AG04450 (cell line): ENCODE measurements at regions of chr19 and their contacts with region 1.

Region 1: DNA sequence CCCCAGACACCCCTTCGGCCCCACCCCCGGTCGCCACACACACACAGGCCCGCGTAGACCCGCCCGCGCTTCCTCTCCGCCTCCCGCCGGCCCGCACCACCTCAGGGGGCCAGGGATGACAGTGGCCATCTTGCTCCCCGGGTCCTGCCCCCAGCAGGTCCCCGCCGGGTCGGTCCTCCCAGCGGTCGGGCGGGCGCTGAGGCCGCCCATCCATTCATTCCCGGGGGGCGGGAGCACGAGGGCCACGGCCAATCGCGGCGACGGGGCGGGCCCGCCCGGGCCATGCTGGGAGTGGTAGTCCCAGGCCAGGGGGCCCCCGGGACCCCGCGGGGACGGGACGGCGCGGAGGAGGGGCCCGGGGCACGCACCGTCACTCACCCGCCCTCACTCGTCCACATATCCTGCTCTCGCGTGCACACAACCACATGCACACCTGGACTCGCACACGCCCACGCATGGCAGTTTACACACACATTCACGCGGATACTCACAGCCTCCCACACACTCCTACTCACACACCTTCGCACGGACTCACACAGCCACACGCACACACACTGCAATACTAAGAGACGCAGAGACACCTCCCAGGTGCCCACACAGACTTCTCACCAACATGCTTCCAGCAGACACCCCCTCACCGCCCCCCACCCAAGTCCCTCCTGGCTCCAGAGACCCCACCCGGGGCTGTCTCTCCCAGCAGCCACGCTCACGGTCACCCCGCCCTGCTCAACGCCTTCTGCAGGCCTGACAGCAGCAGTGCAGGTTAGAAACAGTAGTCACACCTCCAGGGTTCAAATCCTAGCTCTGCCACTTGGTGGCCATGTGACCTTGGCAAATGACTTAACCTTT is at the start of gene DPF1:
- DNase-seq: no peak
- H3K4me3 ChIP-seq: peak within 1 kb of the TSS; percentile 67
- H3K27ac ChIP-seq: no peak within 1 kb of the TSS
- H3K27me3 ChIP-seq: no peaks in the 10 kb centered on the region
- CTCF ChIP-seq: 0 out of 2 replicates have a peak, but pooled peaks have one; percentile 9
- polyA plus RNA-seq, gene DPF1: 1.4 and 1.6 TPM in 2 replicates

Region 2: DNA sequence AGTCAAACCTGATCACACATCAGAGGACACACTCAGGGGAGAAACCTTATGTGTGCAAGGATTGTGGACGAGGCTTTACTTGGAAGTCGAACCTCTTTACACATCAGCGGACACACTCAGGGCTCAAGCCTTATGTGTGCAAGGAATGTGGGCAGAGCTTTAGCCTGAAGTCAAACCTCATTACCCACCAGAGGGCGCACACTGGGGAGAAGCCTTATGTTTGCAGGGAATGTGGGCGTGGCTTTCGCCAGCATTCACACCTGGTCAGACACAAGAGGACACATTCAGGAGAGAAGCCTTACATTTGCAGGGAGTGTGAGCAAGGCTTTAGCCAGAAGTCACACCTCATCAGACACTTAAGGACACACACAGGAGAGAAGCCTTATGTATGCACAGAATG is 861.5 kb before region 1 on chr19:
- CTCF ChIA-PET with region 1: no interaction called
- POLR2A ChIA-PET with region 1: no interaction called
- DNase-seq: no peak
- H3K4me3 ChIP-seq: no peak overlapping the region
- H3K27ac ChIP-seq: no peak overlapping the region
- H3K27me3 ChIP-seq: no peaks in the 10 kb centered on the region
- CTCF ChIP-seq: no peak

Region 3: DNA sequence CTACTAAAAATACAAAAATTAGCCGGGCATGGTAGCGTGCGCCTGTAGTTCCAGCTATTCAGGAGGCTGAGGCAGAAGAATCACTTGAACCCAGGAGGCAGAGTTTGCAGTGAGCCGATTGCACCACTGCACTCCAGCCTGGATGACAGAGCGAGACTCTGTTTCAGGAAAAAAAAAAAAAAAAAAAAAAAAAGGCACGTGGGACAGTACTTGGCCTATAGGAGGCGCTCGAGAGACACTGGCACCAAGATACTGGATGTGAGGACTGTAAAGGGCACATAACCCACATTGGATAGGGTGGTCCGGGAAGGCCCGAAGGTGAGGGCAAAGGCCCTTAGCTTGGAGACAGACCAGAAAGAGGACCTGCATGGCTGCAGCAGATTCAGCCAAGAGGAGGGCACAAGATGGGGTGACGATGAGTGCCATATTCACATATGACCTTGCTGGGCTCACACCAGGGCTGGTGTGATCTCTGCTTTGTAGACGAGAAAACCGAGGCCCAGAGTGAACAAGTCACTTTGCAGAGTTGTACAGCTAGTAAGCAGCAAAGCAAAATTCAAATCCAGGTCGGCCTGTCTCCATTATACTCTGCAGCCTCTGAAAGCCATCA is 89.6 kb before region 1 on chr19:
- CTCF ChIA-PET with region 1: interaction called, 11 read pairs
- POLR2A ChIA-PET with region 1: no interaction called
- DNase-seq: no peak
- H3K4me3 ChIP-seq: no peak overlapping the region
- H3K27ac ChIP-seq: no peak overlapping the region
- H3K27me3 ChIP-seq: no peaks in the 10 kb centered on the region
- CTCF ChIP-seq: peak; percentile 67

Region 4: DNA sequence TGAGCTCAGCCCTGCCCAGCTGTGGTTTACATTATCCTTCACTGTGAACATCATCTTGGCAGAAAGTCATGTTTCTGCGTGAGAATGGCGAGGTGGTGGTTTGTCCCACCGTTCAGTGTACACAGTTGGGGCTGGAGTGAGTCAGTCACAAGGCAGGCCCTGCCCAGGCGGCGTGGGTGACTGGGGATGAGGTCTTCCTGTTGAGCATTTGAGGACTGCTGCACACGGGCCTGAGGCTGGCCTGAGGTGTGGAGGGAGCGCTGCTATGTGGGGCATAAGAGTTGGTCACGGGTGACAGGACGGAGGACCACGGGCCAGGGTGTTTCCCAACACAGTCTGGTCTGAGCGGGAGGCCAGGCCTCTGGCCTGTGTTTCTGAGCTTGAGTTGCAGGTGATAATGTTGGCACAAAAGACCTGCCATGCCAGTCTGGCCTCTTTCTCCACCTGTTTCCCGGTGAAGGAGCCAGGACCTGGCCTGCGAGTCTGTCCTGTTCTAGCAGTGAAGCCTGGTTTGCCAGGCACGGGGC is 66.5 kb after region 1 on chr19:
- CTCF ChIA-PET with region 1: no interaction called
- POLR2A ChIA-PET with region 1: no interaction called
- DNase-seq: peak; percentile 86
- H3K4me3 ChIP-seq: no peak overlapping the region
- H3K27ac ChIP-seq: peak overlapping the region; percentile 80
- H3K27me3 ChIP-seq: no peaks in the 10 kb centered on the region
- CTCF ChIP-seq: no peak